Gastrocnemius medialis (tissue), 4 donors: ENCODE measurements at regions of chr14 and their contacts with region 1.

Region 1: DNA sequence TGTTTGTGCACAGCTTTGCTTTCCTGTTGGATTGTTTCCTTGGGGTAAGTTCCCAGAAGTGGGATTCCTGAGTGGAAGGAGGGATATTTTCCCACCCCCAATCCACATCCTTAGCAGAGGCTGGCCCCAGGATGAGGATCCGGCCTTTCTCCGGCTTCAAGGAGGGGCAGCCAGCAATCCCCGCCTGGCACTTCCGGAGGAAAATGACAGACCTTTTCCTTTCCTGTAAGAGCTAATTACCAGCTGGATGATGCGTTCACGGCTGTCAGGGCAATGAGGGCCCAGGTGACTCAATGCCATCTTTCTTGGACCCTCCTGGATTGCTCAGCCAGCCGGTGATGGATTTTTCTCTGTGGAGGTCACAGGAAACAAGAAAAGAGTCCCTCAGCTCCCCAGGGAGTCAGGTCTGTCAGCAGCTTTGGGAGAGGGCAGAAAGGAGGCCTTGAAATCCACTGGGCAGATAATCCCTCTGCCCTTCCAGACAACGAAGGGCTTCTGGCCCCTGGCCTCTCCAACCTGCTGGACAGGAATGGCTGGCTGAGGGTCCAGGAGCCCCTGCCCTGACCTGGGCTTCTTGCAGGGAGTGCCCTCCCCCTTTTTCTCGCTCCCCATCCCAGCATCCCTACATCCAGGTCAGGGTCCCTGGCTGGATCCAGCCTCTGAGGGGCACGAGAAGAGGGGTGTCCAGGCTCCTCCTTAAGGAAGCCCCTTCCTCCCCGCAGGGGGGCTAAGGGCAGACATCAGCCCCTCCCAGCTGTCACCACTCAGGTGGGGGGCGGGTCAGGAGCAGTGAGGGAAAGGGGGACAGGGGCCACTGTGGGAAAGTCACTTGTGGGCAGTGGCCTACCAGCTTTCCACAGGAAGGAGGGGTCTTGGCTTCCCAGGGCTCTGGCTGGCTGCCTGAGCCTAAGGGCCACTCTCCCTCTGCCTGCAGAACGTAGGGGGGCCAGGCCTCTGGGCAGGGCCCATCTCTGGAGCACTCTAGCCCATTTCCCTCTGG is 16.1 kb upstream of the CCDC85C start:
- DNase-seq: no peak
- ATAC-seq: peak; percentile 16 to 44
- H3K4me3 ChIP-seq: no peak overlapping the region
- H3K27ac ChIP-seq: peak overlapping the region in 3 of 4 donors; percentile 13 to 46 (median 41)
- H3K4me1 ChIP-seq: peaks cover under 1 to 6% of the 10 kb centered on the region in 2 donors
- H3K27me3 ChIP-seq: peaks cover 6 to 8% (median 7%) of the 10 kb centered on the region in 3 donors
- CTCF ChIP-seq: no peak
- POLR2A ChIP-seq: no peak

Region 2: GRCh38 chr14:99563233-99564129 is 56.7 kb before region 1 on chr14:
- in situ Hi-C with region 1: loop called in 1 of 4 experiments (anchors 10 kb)
- intact Hi-C with region 1: no loop called
- DNase-seq: peak; percentile 43 to 66
- ATAC-seq: peak; percentile 67 to 73
- H3K4me3 ChIP-seq: no peak overlapping the region
- H3K27ac ChIP-seq: no peak overlapping the region
- H3K4me1 ChIP-seq: peaks cover 21 to 35% of the 10 kb centered on the region in 2 donors
- H3K27me3 ChIP-seq: no peaks in the 10 kb centered on the region
- CTCF ChIP-seq: peak in 3 of 5 experiments; percentile 46 to 57 (median 48)
- POLR2A ChIP-seq: no peak

Region 3: DNA sequence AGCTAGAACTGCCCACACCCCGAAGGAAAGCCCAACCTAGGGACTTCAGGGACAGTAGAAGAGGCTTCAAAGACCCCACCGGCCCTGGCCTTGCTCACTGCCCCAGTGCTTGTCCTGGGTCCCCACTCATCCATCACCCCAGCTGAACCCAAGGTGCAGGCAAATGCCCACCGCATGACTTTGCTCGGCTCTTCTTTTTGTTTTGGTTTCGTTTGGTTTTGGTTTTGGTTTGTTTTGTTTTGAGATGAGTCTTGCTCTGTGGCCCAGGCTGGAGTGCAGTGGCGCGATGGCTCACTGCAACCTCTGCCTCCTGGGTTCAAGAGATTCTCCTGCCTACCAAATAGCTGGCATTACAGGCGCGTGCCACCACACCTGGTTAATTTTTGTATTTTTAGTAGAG is 25.1 kb before region 1 on chr14:
- in situ Hi-C with region 1: no loop called
- intact Hi-C with region 1: loop called (anchors 2 kb)
- DNase-seq: no peak
- ATAC-seq: no peak
- H3K4me3 ChIP-seq: no peak overlapping the region
- H3K27ac ChIP-seq: peak overlapping the region in 3 of 4 donors; percentile 51 to 70 (median 52)
- H3K4me1 ChIP-seq: peaks cover 45 to 70% of the 10 kb centered on the region in 2 donors
- H3K27me3 ChIP-seq: no peaks in the 10 kb centered on the region
- CTCF ChIP-seq: no peak
- POLR2A ChIP-seq: no peak

Region 4: GRCh38 chr14:100147181-100147631 is 527.1 kb after region 1 on chr14:
- in situ Hi-C with region 1: no loop called
- intact Hi-C with region 1: no loop called
- DNase-seq: no peak
- ATAC-seq: no peak
- H3K4me3 ChIP-seq: no peak overlapping the region
- H3K27ac ChIP-seq: no peak overlapping the region
- H3K4me1 ChIP-seq: no peaks in the 10 kb centered on the region
- H3K27me3 ChIP-seq: peaks cover 0 to 7% (median 5%) of the 10 kb centered on the region in 3 donors
- CTCF ChIP-seq: no peak
- POLR2A ChIP-seq: no peak